ENCODE measurements at regions of chrX and their contacts with region 1.

Region 1: DNA sequence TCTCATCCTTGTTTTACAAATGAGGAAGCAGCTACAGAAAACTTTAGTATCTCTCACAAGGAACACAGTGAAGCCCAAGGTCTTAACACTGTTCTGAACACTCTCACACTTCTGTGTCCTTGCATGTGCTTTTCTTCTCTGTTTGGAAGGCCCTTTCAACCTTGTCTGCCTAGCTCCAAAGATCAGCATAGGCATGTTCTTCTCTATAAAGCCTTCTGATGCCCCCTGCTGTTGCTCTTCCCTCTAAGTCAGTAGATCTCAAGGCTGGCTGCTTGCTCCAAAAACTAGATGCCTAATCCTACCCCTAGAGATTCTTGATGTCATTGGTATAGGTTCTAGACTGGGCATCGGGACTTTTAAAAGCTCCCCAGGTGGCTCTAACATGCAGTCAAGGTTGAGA is 5.9 kb downstream of the APOO start:
- DNase-seq: peak in 9 of 14 experiments; percentile 4 to 75 (median 30)
- ATAC-seq: peak; percentile 80
- H3K4me3 ChIP-seq: no peak overlapping the region
- H3K4me3 Mint-ChIP-seq: no peak overlapping the region
- H3K27ac ChIP-seq: no peak overlapping the region
- H3K27ac Mint-ChIP-seq: no peak overlapping the region
- H3K4me1 ChIP-seq: no peaks in the 10 kb centered on the region
- H3K4me1 Mint-ChIP-seq: peaks cover 4% of the 10 kb centered on the region
- H3K27me3 ChIP-seq: no peaks in the 10 kb centered on the region
- H3K27me3 Mint-ChIP-seq: no peaks in the 10 kb centered on the region
- CTCF ChIP-seq: no peak

Region 2: DNA sequence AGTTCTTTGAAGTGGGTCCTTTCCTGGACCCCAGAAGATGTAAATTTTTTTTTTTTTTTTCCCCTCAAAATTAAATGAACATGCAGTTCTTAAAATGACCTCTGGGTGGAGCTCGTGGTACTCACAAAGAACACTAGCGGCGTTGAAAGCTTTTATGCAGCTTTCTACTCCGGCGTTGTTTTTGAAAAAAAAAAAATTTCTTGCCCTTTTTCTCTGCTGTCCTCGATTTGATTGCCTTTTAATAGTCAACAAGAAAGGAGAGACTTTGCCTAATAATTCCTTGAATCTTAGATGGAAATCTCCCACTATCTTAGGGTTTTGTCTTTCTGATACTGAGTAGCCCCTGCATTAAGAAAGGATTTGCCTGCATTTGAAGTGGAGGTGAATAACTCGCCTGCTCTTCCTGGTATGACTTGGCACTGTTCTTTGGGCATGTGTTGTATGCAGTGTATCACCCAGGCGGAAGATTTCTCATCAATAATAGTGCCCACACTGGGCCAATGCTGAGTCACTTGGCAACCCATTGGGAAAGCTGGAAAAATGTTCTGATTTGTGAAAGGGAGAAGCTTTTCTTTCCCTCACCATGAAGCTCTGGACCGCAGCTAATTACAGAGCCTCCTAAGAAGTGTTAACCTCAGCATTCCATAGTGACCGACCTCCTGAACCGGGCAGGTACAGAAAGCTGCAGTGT is 1765.7 kb before region 1 on chrX:
- CTCF ChIA-PET with region 1: no interaction called
- POLR2A ChIA-PET with region 1: no interaction called
- intact Hi-C with region 1: loop called in 1 of 2 experiments (anchors 5 kb)
- DNase-seq: peak in 6 of 14 experiments; percentile 1 to 58 (median 38)
- ATAC-seq: peak; percentile 44
- H3K4me3 ChIP-seq: no peak overlapping the region
- H3K4me3 Mint-ChIP-seq: peak overlapping the region; percentile 71
- H3K27ac ChIP-seq: no peak overlapping the region
- H3K27ac Mint-ChIP-seq: no peak overlapping the region
- H3K4me1 ChIP-seq: peaks cover 3% of the 10 kb centered on the region
- H3K4me1 Mint-ChIP-seq: peaks cover 10% of the 10 kb centered on the region
- H3K27me3 ChIP-seq: no peaks in the 10 kb centered on the region
- H3K27me3 Mint-ChIP-seq: no peaks in the 10 kb centered on the region
- CTCF ChIP-seq: peak; percentile 62

Region 3: GRCh38 chrX:23694606-23695005 is 207.2 kb before region 1 on chrX:
- CTCF ChIA-PET with region 1: interaction called, 18 read pairs
- POLR2A ChIA-PET with region 1: interaction called, 4 read pairs
- intact Hi-C with region 1: loop called (anchors 1 kb)
- DNase-seq: peak; percentile 10 to 73 (median 28)
- ATAC-seq: peak; percentile 71
- H3K4me3 ChIP-seq: no peak overlapping the region
- H3K4me3 Mint-ChIP-seq: no peak overlapping the region
- H3K27ac ChIP-seq: no peak overlapping the region
- H3K27ac Mint-ChIP-seq: no peak overlapping the region
- H3K4me1 ChIP-seq: no peaks in the 10 kb centered on the region
- H3K4me1 Mint-ChIP-seq: no peaks in the 10 kb centered on the region
- H3K27me3 ChIP-seq: no peaks in the 10 kb centered on the region
- H3K27me3 Mint-ChIP-seq: no peaks in the 10 kb centered on the region
- CTCF ChIP-seq: peak; percentile 20

Region 4: DNA sequence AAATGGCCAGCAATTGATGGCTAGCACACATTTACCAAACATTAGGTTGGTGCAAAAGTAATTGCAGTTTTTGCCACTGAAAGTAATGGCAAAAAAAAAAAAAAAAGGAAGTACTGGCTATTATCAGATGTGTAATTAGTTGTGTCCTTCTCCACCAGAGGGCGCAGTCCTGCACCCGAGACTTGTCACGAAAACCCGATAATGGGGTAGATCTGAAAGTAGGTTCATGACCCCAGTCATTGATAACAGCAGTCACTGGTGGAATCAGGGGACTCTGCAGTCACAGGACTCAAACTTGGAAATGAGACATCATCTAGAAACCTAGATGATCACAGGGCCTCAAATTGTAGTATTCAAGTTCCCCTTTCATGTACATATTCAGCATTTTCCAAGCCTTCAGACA is 145.6 kb before region 1 on chrX:
- CTCF ChIA-PET with region 1: interaction called, 5 read pairs
- POLR2A ChIA-PET with region 1: no interaction called
- intact Hi-C with region 1: loop called (anchors 1 kb)
- DNase-seq: peak; percentile 27 to 80 (median 53)
- ATAC-seq: peak; percentile 62
- H3K4me3 ChIP-seq: no peak overlapping the region
- H3K4me3 Mint-ChIP-seq: no peak overlapping the region
- H3K27ac ChIP-seq: no peak overlapping the region
- H3K27ac Mint-ChIP-seq: no peak overlapping the region
- H3K4me1 ChIP-seq: peaks cover 3% of the 10 kb centered on the region
- H3K4me1 Mint-ChIP-seq: peaks cover 4% of the 10 kb centered on the region
- H3K27me3 ChIP-seq: no peaks in the 10 kb centered on the region
- H3K27me3 Mint-ChIP-seq: no peaks in the 10 kb centered on the region
- CTCF ChIP-seq: peak; percentile 58

Region 5: GRCh38 chrX:24034485-24034884 is 132.7 kb after region 1 on chrX:
- CTCF ChIA-PET with region 1: no interaction called
- POLR2A ChIA-PET with region 1: no interaction called
- intact Hi-C with region 1: no loop called
- DNase-seq: no peak
- ATAC-seq: no peak
- H3K4me3 ChIP-seq: no peak overlapping the region
- H3K4me3 Mint-ChIP-seq: no peak overlapping the region
- H3K27ac ChIP-seq: no peak overlapping the region
- H3K27ac Mint-ChIP-seq: no peak overlapping the region
- H3K4me1 ChIP-seq: no peaks in the 10 kb centered on the region
- H3K4me1 Mint-ChIP-seq: no peaks in the 10 kb centered on the region
- H3K27me3 ChIP-seq: no peaks in the 10 kb centered on the region
- H3K27me3 Mint-ChIP-seq: no peaks in the 10 kb centered on the region
- CTCF ChIP-seq: no peak